Caco-2 (cell line): ENCODE measurements at regions of chr1 and their contacts with region 1.

Region 1: DNA sequence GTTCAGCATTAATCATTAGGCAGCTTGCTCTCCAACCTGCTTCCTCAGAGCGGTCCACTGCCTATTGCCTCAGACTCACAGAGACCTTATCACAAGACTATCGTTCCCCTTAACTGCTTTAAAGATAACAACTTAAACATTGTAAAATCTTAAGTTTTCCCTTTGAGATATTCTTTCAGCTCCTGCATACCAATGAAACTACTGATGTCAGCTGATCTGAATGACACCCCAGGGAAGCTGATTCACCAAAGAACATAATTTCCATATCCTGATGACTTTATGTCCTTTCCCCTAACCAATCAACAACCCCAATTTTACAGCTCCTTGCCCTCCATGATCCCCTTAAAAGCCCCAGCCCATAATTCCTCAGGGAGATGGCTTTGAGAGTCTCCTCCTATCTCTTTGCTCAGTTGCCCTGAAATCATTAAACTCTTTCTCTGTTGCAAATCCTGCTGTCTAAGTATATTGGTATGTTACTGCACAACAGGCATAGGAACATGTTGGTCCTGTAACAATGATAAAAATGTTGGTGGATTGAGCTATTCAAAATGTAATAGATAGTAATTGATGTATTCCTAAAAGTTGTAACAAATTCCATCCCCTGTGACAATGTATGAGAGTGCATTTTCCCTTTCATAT is 621.4 kb upstream of the RGS18 start:
- DNase-seq: peak in 1 of 2 experiments; percentile 8
- H3K4me3 ChIP-seq: no peak overlapping the region
- H3K4me3 Mint-ChIP-seq: no peak overlapping the region
- H3K27ac Mint-ChIP-seq: no peak overlapping the region
- H3K4me1 ChIP-seq: peaks cover 7% of the 10 kb centered on the region; the same call in 1 of the 2 replicates
- H3K4me1 Mint-ChIP-seq: peaks cover 6% of the 10 kb centered on the region
- H3K27me3 ChIP-seq: no peaks in the 10 kb centered on the region
- H3K27me3 Mint-ChIP-seq: no peaks in the 10 kb centered on the region
- CTCF ChIP-seq: no peak

Region 2: GRCh38 chr1:191508239-191508638 is 28.7 kb before region 1 on chr1:
- CTCF ChIA-PET with region 1: no interaction called
- POLR2A ChIA-PET with region 1: no interaction called
- intact Hi-C with region 1: loop called (anchors 1 kb)
- DNase-seq: no peak
- H3K4me3 ChIP-seq: no peak overlapping the region
- H3K4me3 Mint-ChIP-seq: no peak overlapping the region
- H3K27ac Mint-ChIP-seq: no peak overlapping the region
- H3K4me1 ChIP-seq: no peaks in the 10 kb centered on the region
- H3K4me1 Mint-ChIP-seq: peaks cover under 1% of the 10 kb centered on the region
- H3K27me3 ChIP-seq: no peaks in the 10 kb centered on the region
- H3K27me3 Mint-ChIP-seq: no peaks in the 10 kb centered on the region
- CTCF ChIP-seq: no peak

Region 3: DNA sequence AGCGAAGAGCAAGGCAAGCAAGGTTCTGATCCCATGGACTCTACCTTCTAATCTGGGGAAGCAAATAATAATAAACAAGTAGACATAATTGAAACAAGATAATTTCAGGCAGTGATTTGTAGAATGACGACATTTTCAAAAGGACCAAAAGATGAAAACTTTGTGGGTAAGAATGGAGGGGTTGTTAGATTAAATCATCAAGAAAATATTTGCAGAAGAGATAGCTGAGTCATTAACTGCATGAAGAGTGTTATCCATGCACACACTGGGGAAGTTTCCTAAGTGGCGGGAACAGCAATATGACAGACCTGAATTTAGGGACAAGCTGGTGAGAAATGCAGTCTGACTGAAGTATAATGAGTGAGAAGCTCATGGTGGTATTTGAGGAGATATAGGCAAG is 38.3 kb after region 1 on chr1:
- CTCF ChIA-PET with region 1: no interaction called
- POLR2A ChIA-PET with region 1: no interaction called
- intact Hi-C with region 1: no loop called
- DNase-seq: no peak
- H3K4me3 ChIP-seq: no peak overlapping the region
- H3K4me3 Mint-ChIP-seq: no peak overlapping the region
- H3K27ac Mint-ChIP-seq: no peak overlapping the region
- H3K4me1 ChIP-seq: no peaks in the 10 kb centered on the region
- H3K4me1 Mint-ChIP-seq: no peaks in the 10 kb centered on the region
- H3K27me3 ChIP-seq: no peaks in the 10 kb centered on the region
- H3K27me3 Mint-ChIP-seq: no peaks in the 10 kb centered on the region
- CTCF ChIP-seq: no peak